Activated CD4-positive, alpha-beta memory T cell treated with anti-CD3 and anti-CD28 coated beads for 36 hours (primary cell): ENCODE measurements at regions of chr21 and their contacts with region 1.

Region 1: DNA sequence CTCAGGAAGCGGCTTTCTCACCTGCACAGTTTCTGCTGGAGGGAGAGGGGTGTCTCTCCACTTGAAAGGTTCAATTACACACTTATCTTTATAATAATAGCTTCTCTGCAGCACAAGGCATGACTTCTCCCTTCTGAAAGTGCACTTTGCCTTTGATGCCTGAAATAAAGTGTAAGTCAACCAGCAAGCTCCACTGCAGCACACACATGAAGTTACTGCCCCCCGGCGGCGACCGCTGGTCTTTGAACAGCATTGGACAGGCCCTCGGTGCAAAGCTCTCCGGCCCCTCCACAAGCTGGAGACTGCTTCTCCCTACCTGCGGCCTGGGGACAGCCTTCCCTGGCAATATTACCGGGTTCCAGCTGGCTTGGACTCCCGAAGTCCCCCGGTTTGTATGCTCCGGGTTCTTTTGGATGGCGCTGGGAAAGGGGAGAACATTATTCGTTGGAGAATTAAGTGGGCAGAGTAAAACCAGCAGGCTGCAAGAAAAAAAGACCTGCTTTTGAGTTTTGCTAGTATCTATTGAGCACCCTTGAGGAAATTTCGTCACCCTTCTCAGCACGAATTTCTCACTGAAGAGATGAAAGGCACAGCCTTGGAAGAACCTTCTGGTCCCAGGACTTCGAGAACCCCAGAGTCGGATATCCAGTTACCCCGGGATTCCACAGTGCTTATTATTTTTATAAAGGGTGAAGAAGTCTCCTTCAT is 11.8 kb downstream of the RCAN1 start:
- DNase-seq: peak; percentile 77
- H3K4me3 Mint-ChIP-seq: no peak overlapping the region
- H3K27ac Mint-ChIP-seq: no peak overlapping the region
- H3K4me1 Mint-ChIP-seq: no peaks in the 10 kb centered on the region
- H3K27me3 Mint-ChIP-seq: no peaks in the 10 kb centered on the region

Region 2: DNA sequence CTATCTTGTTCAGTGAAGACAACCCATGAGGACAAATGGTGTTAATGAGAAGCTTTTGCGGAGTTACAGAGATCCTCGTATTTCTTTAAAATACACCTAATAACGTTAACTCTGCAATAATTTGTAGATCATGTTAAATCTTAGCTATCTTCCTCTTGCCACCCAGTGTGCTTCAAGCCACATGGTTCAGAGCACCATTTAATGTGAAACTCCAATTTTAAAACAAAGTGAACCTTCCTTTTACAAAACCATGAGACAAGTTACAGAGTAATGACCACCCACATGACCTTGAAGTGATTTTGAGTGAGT is 241.1 kb before region 1 on chr21:
- CTCF ChIA-PET with region 1: interaction called, 21 read pairs
- POLR2A ChIA-PET with region 1: no interaction called
- intact Hi-C with region 1: no loop called
- DNase-seq: no peak
- H3K4me3 Mint-ChIP-seq: no peak overlapping the region
- H3K27ac Mint-ChIP-seq: no peak overlapping the region
- H3K4me1 Mint-ChIP-seq: peaks cover 5% of the 10 kb centered on the region
- H3K27me3 Mint-ChIP-seq: peaks cover 9% of the 10 kb centered on the region

Region 3: DNA sequence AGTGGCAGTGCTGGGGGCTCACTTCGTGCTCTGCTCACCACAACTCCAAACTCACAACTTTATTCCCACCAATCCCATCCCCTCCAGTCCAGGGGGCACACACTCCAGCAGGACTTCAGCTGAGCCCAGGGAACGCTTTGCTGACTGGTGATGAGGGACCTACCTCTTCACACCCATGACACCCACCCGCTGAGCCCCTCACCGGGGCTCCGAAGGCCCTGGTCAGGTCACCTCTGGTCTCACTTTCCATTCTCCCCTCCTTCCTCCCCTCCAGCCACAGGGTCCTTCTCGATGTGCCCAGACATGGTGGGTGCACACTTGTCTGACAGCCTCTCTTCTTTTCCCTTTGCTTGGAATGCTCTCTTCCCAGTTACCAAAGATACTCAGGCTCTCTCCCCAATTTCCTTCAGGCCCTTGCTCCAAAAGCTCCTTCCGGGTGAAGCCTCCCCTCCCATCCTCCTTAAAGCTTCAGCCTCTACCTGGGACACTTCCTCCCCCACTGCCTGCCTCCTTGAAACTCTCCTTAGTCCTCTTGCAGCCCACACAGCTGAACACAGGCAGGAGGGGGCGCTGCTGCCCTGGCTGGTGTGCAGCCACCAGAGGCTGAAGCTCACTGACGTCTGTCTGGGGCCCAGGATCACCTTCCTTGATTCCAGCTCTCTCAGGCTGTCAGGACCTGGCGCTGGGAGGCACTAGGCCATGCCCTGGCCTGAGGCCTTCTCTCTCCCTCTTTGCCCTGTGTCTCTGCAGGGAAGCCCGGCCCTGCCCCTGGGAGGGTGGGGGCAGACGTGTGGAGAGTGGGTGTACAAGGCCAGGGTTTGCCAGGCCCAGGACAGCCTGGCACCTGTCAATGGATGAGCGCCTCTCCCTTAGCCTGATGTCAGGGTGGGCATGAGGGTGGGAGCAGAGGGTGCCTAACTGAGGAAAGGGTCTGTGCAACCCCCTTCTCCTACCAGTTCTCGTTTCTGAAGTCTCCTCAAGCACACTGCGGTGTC is 92.7 kb before region 1 on chr21:
- CTCF ChIA-PET with region 1: interaction called, 30 read pairs
- POLR2A ChIA-PET with region 1: no interaction called
- intact Hi-C with region 1: no loop called
- DNase-seq: peak; percentile 73
- H3K4me3 Mint-ChIP-seq: no peak overlapping the region
- H3K27ac Mint-ChIP-seq: no peak overlapping the region
- H3K4me1 Mint-ChIP-seq: no peaks in the 10 kb centered on the region
- H3K27me3 Mint-ChIP-seq: no peaks in the 10 kb centered on the region

Region 4: GRCh38 chr21:34526618-34527290 is 76.4 kb before region 1 on chr21:
- CTCF ChIA-PET with region 1: interaction called, 12 read pairs
- POLR2A ChIA-PET with region 1: no interaction called
- intact Hi-C with region 1: no loop called
- DNase-seq: peak; percentile 66
- H3K4me3 Mint-ChIP-seq: peak overlapping the region; percentile 59
- H3K27ac Mint-ChIP-seq: peak overlapping the region; percentile 76
- H3K4me1 Mint-ChIP-seq: peaks cover 22% of the 10 kb centered on the region
- H3K27me3 Mint-ChIP-seq: no peaks in the 10 kb centered on the region

Region 5: DNA sequence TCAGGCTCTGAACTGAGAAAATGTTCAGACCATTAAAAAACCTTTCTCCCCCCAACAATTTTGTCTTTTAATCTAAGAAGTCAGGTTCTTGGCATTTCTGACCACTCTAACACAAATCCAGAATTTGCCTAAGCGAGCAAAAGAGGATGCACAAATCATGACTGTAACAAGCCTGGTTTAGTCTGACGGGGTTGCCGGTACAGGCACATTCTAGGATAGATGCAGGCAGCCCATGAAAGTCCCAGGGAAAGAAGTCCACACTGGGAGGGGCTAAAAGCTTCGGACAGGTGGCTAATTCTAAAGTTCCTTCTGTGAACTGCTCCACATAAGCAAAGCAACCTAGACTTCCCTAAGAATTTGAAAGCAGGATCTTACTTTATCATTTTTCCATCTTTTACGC is 43.1 kb before region 1 on chr21:
- CTCF ChIA-PET with region 1: no interaction called
- POLR2A ChIA-PET with region 1: no interaction called
- intact Hi-C with region 1: no loop called
- DNase-seq: no peak
- H3K4me3 Mint-ChIP-seq: no peak overlapping the region
- H3K27ac Mint-ChIP-seq: no peak overlapping the region
- H3K4me1 Mint-ChIP-seq: peaks cover 5% of the 10 kb centered on the region
- H3K27me3 Mint-ChIP-seq: no peaks in the 10 kb centered on the region

Region 6: DNA sequence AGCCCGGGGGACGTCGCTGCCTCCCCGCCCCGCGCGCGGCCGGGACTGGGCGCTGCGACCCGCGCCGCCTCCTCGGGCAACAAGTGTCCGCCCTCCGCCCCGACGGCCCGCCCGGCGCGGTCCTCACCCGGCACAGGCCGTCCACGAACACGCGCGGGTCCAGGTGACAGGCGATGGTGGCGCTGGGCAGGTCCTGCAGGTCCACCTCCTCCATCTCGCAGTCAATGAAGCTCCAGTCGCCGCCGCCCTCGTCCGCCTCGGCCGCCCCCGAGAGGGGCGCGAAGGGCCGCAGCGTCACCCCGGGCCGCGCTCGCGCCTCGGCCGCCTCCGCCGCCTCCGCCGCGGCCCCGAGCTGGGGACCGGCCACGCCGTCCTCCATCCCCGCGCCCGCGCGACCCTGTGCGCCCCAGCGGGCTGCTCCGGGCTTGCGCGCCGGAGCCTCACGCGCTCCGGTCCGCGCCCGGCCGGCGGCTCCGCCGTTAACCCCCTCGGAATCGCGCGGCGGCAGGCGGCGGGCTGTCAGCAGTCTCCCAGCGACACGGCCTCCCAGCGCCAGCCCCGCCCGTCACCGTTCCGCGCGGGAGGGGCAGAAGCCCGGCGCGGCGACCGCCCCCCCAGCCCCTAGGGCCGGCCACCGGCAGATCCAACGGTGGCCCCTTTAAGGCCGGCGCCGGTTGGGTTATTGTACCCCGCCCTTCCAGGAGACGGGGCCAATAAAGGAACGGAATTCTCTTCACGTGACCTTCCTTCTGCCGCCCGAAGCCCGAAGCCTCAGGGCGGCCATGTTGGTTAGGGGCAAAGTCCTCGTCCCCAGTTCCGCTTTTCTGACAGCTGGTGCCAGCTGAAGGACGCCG is 11.7 kb after region 1 on chr21 and contains the start of gene RCAN1:
- CTCF ChIA-PET with region 1: interaction called, 23 read pairs
- POLR2A ChIA-PET with region 1: no interaction called
- intact Hi-C with region 1: no loop called
- DNase-seq: peak; percentile 92
- H3K4me3 Mint-ChIP-seq: peak within 1 kb of the TSS; percentile 79
- H3K27ac Mint-ChIP-seq: peak within 1 kb of the TSS; percentile 69
- H3K4me1 Mint-ChIP-seq: peaks cover 15% of the 10 kb centered on the region
- H3K27me3 Mint-ChIP-seq: no peaks in the 10 kb centered on the region
- total RNA-seq, gene RCAN1: 8.6 to 9.7 TPM

Region 7: DNA sequence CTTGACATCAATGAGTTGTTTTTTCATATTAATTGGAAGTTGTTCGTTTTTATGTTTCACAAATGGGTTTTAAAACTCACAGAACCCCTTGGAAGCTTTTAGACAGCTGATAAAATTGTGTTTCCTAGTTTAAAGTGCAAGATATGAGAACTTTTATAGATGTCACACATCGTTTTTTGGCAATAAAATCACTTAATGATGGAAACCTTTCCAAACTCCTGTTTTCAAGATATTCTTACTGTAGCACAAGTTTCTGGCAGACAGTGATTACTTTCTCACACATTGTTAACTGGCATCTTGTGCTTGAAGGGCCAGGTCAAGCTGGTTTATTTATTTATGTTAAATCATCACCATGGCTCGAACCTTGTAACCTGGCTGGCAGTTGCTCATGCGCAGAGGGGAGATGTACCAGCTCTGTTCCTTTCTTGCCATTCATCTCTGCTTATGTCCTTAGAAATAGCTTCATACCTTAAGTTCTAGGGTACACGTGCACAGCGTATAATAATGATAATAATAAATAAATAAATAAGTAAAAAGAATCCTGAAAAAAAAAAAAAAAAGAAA is 22.0 kb after region 1 on chr21:
- CTCF ChIA-PET with region 1: interaction called, 14 read pairs
- POLR2A ChIA-PET with region 1: no interaction called
- intact Hi-C with region 1: no loop called
- DNase-seq: no peak
- H3K4me3 Mint-ChIP-seq: no peak overlapping the region
- H3K27ac Mint-ChIP-seq: no peak overlapping the region
- H3K4me1 Mint-ChIP-seq: no peaks in the 10 kb centered on the region
- H3K27me3 Mint-ChIP-seq: peaks cover 27% of the 10 kb centered on the region

Region 8: DNA sequence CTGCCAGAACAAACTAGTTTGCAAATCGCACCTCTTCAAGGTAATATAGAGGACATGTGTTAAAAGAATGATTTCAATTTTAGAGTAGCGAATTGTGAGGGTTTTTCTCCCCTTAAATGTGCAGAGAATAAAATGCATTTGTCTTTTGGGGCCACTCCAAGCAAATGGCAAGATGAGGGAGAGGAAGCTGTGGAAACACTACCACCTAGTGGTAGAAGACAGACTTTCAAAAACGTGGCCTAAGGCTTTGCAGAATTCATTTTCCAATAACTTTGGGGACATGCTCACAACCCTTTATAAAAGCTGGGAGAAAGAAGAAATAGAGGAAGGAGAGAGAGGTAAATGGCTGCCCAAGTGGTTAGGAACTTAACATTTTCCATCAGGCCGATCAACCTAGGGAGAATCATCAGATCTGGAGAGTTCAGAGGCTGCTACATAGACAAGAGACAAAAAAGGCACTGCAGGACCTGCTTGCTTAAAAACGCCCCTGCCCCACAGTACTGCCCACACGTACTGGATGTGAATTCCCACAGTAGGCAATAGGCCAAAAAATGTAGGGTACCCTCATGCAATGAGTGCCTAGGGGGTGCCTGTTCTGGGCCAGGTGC is 27.5 kb after region 1 on chr21:
- CTCF ChIA-PET with region 1: interaction called, 14 read pairs
- POLR2A ChIA-PET with region 1: no interaction called
- intact Hi-C with region 1: no loop called
- DNase-seq: peak; percentile 21
- H3K4me3 Mint-ChIP-seq: no peak overlapping the region
- H3K27ac Mint-ChIP-seq: no peak overlapping the region
- H3K4me1 Mint-ChIP-seq: no peaks in the 10 kb centered on the region
- H3K27me3 Mint-ChIP-seq: peaks cover 14% of the 10 kb centered on the region